RWPE1 (cell line): ENCODE measurements at regions of chr7 and their contacts with region 1.

Region 1: GRCh38 chr7:101138213-101138870 is 11.4 kb downstream of the SERPINE1 start:
- DNase-seq: peak; percentile 92
- H3K27ac ChIP-seq: peak overlapping the region; percentile 92
- CTCF ChIP-seq: peak; percentile 97

Region 2: DNA sequence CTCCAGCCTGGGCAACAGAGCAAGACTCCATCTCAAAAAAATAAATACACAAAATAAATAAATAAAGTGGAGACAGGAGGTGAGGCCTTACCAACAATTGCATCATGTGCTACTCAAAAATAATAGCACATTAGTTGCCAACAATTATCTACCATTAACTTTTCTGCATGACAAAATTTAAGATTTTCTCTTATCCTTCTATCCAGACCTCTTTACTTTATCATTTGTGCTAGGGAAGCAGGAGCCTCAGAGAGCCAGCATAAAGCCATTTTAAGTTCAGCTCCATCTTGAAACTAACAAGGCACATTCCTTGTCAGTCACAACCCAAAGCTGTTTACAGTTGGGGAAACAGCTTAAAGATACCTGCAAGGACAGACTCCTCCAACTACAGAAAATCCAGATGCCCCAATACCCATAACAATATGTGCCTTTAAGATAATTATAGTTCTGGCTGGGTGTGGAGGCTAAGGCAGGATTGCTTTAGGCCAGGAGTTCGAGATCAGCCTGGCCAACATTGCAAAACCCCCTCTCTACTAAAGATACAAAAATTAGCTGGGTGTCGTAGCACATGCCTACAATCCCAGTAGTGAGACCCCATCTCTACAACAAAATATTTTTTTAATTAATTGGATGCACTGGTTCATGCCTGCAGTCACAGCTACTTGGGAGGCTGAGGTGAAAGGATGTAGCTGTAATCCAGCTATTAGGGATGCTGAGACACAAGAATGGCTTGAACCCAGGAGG is 13.7 kb after region 1 on chr7:
- CTCF ChIA-PET with region 1: interaction called, 12 read pairs
- POLR2A ChIA-PET with region 1: no interaction called
- DNase-seq: no peak
- H3K27ac ChIP-seq: no peak overlapping the region
- CTCF ChIP-seq: no peak

Region 3: GRCh38 chr7:101185258-101185839 is 47.0 kb after region 1 on chr7:
- CTCF ChIA-PET with region 1: interaction called, 28 read pairs
- POLR2A ChIA-PET with region 1: no interaction called
- DNase-seq: no peak
- H3K27ac ChIP-seq: no peak overlapping the region
- CTCF ChIP-seq: no peak

Region 4: GRCh38 chr7:101244375-101245146 is 106.2 kb after region 1 on chr7 and contains the start of gene FIS1:
- CTCF ChIA-PET with region 1: interaction called, 10 read pairs
- POLR2A ChIA-PET with region 1: no interaction called
- DNase-seq: peak; percentile 85
- H3K27ac ChIP-seq: peak within 1 kb of the TSS; percentile 90
- CTCF ChIP-seq: peak; percentile 98

Region 5: DNA sequence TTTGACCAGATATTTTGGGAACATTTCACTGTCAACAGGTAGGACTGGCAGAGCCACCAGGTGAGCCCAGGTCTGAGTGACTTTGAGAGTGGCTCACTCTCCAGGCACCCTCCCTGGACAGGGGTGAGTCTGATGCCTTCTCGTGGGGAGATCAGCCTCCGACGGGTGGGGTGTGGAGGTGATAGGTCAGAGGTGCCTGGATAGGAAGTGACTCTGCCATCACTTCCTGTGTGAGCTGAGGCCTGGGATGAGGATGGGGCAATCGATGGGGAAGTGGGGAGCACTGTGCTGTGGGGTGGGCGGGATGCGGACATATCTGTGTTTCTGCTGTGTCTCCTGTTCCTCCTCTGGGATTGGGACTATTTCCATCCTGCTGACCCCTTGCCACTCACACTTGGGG is 148.7 kb after region 1 on chr7:
- CTCF ChIA-PET with region 1: interaction called, 16 read pairs
- POLR2A ChIA-PET with region 1: no interaction called
- DNase-seq: no peak
- H3K27ac ChIP-seq: no peak overlapping the region
- CTCF ChIP-seq: no peak